Caco-2 (cell line): ENCODE measurements at regions of chr11 and their contacts with region 1.

Region 1: GRCh38 chr11:46238967-46239800 is 38.3 kb upstream of the CREB3L1 start:
- DNase-seq: peak; percentile 88 to 94
- H3K4me3 ChIP-seq: peak overlapping the region; percentile 60
- H3K4me3 Mint-ChIP-seq: peak overlapping the region; percentile 91
- H3K27ac Mint-ChIP-seq: peak overlapping the region; percentile 77
- H3K4me1 ChIP-seq: peaks cover 6% of the 10 kb centered on the region
- H3K4me1 Mint-ChIP-seq: peaks cover 42% of the 10 kb centered on the region
- H3K27me3 ChIP-seq: no peaks in the 10 kb centered on the region; the same call in 1 of the 2 replicates
- H3K27me3 Mint-ChIP-seq: peaks cover 8% of the 10 kb centered on the region
- CTCF ChIP-seq: peak; percentile 91 to 98

Region 2: GRCh38 chr11:45899448-45900173 is 339.6 kb before region 1 on chr11:
- CTCF ChIA-PET with region 1: no interaction called
- POLR2A ChIA-PET with region 1: no interaction called
- intact Hi-C with region 1: no loop called
- DNase-seq: peak; percentile 87 to 91
- H3K4me3 ChIP-seq: peak overlapping the region; percentile 67
- H3K4me3 Mint-ChIP-seq: peak overlapping the region; percentile 77
- H3K27ac Mint-ChIP-seq: peak overlapping the region; percentile 84
- H3K4me1 ChIP-seq: peaks cover 10% of the 10 kb centered on the region
- H3K4me1 Mint-ChIP-seq: peaks cover 8% of the 10 kb centered on the region
- H3K27me3 ChIP-seq: no peaks in the 10 kb centered on the region
- H3K27me3 Mint-ChIP-seq: peaks cover 4% of the 10 kb centered on the region
- CTCF ChIP-seq: no peak

Region 3: GRCh38 chr11:45964911-45965389 is 274.2 kb before region 1 on chr11:
- CTCF ChIA-PET with region 1: interaction called, 10 read pairs
- POLR2A ChIA-PET with region 1: no interaction called
- intact Hi-C with region 1: no loop called
- DNase-seq: peak; percentile 71 to 80
- H3K4me3 ChIP-seq: no peak overlapping the region
- H3K4me3 Mint-ChIP-seq: no peak overlapping the region
- H3K27ac Mint-ChIP-seq: no peak overlapping the region
- H3K4me1 ChIP-seq: peaks cover 21% of the 10 kb centered on the region
- H3K4me1 Mint-ChIP-seq: peaks cover 14% of the 10 kb centered on the region
- H3K27me3 ChIP-seq: no peaks in the 10 kb centered on the region
- H3K27me3 Mint-ChIP-seq: no peaks in the 10 kb centered on the region
- CTCF ChIP-seq: peak; percentile 92 to 95

Region 4: GRCh38 chr11:46216019-46216764 is 23.0 kb before region 1 on chr11:
- CTCF ChIA-PET with region 1: no interaction called
- POLR2A ChIA-PET with region 1: no interaction called
- intact Hi-C with region 1: no loop called
- DNase-seq: no peak
- H3K4me3 ChIP-seq: no peak overlapping the region
- H3K4me3 Mint-ChIP-seq: no peak overlapping the region
- H3K27ac Mint-ChIP-seq: no peak overlapping the region
- H3K4me1 ChIP-seq: no peaks in the 10 kb centered on the region
- H3K4me1 Mint-ChIP-seq: peaks cover 5% of the 10 kb centered on the region
- H3K27me3 ChIP-seq: no peaks in the 10 kb centered on the region; the same call in 1 of the 2 replicates
- H3K27me3 Mint-ChIP-seq: no peaks in the 10 kb centered on the region
- CTCF ChIP-seq: no peak

Region 5: GRCh38 chr11:46272816-46273427 is 33.7 kb after region 1 on chr11:
- CTCF ChIA-PET with region 1: interaction called, 8 read pairs
- POLR2A ChIA-PET with region 1: interaction called, 23 read pairs
- intact Hi-C with region 1: no loop called
- DNase-seq: no peak
- H3K4me3 ChIP-seq: no peak overlapping the region
- H3K4me3 Mint-ChIP-seq: peak overlapping the region; percentile 26
- H3K27ac Mint-ChIP-seq: peak overlapping the region; percentile 82
- H3K4me1 ChIP-seq: peaks cover 71% of the 10 kb centered on the region
- H3K4me1 Mint-ChIP-seq: peaks cover 57% of the 10 kb centered on the region
- H3K27me3 ChIP-seq: no peaks in the 10 kb centered on the region
- H3K27me3 Mint-ChIP-seq: no peaks in the 10 kb centered on the region
- CTCF ChIP-seq: no peak

Region 6: GRCh38 chr11:46308631-46309419 is 69.6 kb after region 1 on chr11:
- CTCF ChIA-PET with region 1: interaction called, 181 read pairs
- POLR2A ChIA-PET with region 1: interaction called, 6 read pairs
- intact Hi-C with region 1: loop called (anchors 1 kb)
- DNase-seq: peak; percentile 86
- H3K4me3 ChIP-seq: no peak overlapping the region
- H3K4me3 Mint-ChIP-seq: no peak overlapping the region
- H3K27ac Mint-ChIP-seq: peak overlapping the region; percentile 17
- H3K4me1 ChIP-seq: peaks cover 16% of the 10 kb centered on the region
- H3K4me1 Mint-ChIP-seq: peaks cover 27% of the 10 kb centered on the region
- H3K27me3 ChIP-seq: no peaks in the 10 kb centered on the region
- H3K27me3 Mint-ChIP-seq: no peaks in the 10 kb centered on the region
- CTCF ChIP-seq: peak; percentile 96 to 97

Region 7: GRCh38 chr11:46367244-46367915 is 128.2 kb after region 1 on chr11:
- CTCF ChIA-PET with region 1: no interaction called
- POLR2A ChIA-PET with region 1: interaction called, 3 read pairs
- intact Hi-C with region 1: loop called (anchors 5 kb)
- DNase-seq: peak in 1 of 2 experiments; percentile 74
- H3K4me3 ChIP-seq: no peak overlapping the region
- H3K4me3 Mint-ChIP-seq: no peak overlapping the region
- H3K27ac Mint-ChIP-seq: no peak overlapping the region
- H3K4me1 ChIP-seq: peaks cover 6% of the 10 kb centered on the region; the same call in 1 of the 2 replicates
- H3K4me1 Mint-ChIP-seq: no peaks in the 10 kb centered on the region
- H3K27me3 ChIP-seq: no peaks in the 10 kb centered on the region
- H3K27me3 Mint-ChIP-seq: no peaks in the 10 kb centered on the region
- CTCF ChIP-seq: peak; percentile 80 to 84

Region 8: GRCh38 chr11:46529095-46529905 is 290.1 kb after region 1 on chr11:
- CTCF ChIA-PET with region 1: no interaction called
- POLR2A ChIA-PET with region 1: no interaction called
- intact Hi-C with region 1: no loop called
- DNase-seq: peak; percentile 71 to 81
- H3K4me3 ChIP-seq: no peak overlapping the region
- H3K4me3 Mint-ChIP-seq: no peak overlapping the region
- H3K27ac Mint-ChIP-seq: no peak overlapping the region
- H3K4me1 ChIP-seq: no peaks in the 10 kb centered on the region
- H3K4me1 Mint-ChIP-seq: peaks cover 8% of the 10 kb centered on the region
- H3K27me3 ChIP-seq: no peaks in the 10 kb centered on the region
- H3K27me3 Mint-ChIP-seq: no peaks in the 10 kb centered on the region
- CTCF ChIP-seq: peak; percentile 91 to 94